Activated T-helper 1 cell treated with anti-CD3 and anti-CD28 coated beads, Interleukin-12 subunit alpha, Interleukin-12 subunit beta, Interleukin-2, Interleukin-4 antibody, amounts not matched to agents 30 ng/mL and 10 ng/mL and 1 ng/mL, durations not matched to agents 14 hours and 24 hours and 36 hours (primary cell): ENCODE measurements at regions of chr19 and their contacts with region 1.

Region 1: DNA sequence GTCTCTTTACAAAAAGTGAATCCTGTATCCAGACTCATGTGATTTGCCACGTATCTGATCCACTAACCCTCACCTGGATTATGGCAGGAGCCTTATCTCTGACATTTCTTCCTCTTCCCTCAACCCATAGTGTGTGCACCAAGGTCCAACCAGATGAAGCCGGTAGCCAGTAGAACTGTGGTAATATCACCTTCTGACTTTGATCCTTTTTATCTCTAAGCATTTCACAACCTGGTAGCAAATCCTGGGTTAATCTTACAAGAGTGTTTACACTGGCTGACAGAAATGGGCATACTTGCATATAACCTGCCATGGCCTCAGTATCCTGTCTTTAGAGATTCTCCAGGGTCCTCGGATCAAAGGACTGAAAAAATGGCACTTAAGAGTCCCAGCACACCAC is 1.9 kb downstream of the ZNF417 start:
- DNase-seq: no peak
- H3K4me3 Mint-ChIP-seq: peak overlapping the region; percentile 91
- H3K27ac Mint-ChIP-seq: no peak overlapping the region
- H3K4me1 Mint-ChIP-seq: peaks cover 15% of the 10 kb centered on the region
- H3K27me3 Mint-ChIP-seq: no peaks in the 10 kb centered on the region

Region 2: GRCh38 chr19:57613941-57614743 is 300.4 kb before region 1 on chr19 and contains the start of gene ZNF134:
- intact Hi-C with region 1: loop called (anchors 1 kb)
- DNase-seq: peak; percentile 84
- H3K4me3 Mint-ChIP-seq: peak within 1 kb of the TSS; percentile 90
- H3K27ac Mint-ChIP-seq: peak within 1 kb of the TSS; percentile 78
- H3K4me1 Mint-ChIP-seq: peaks cover 11% of the 10 kb centered on the region
- H3K27me3 Mint-ChIP-seq: no peaks in the 10 kb centered on the region
- total RNA-seq, gene ZNF134: 8.4 and 9.4 TPM in 2 replicates

Region 3: GRCh38 chr19:57769345-57770131 is 145.0 kb before region 1 on chr19 and contains the start of gene ZNF586:
- intact Hi-C with region 1: loop called (anchors 1 kb)
- DNase-seq: peak; percentile 85
- H3K4me3 Mint-ChIP-seq: peak within 1 kb of the TSS; percentile 94
- H3K27ac Mint-ChIP-seq: peak within 1 kb of the TSS; percentile 89
- H3K4me1 Mint-ChIP-seq: peaks cover 24% of the 10 kb centered on the region
- H3K27me3 Mint-ChIP-seq: no peaks in the 10 kb centered on the region
- total RNA-seq, gene ZNF586: 13.6 and 13.8 TPM in 2 replicates

Region 4: GRCh38 chr19:57850553-57851017 is 63.9 kb before region 1 on chr19:
- intact Hi-C with region 1: loop called (anchors 2 kb)
- DNase-seq: no peak
- H3K4me3 Mint-ChIP-seq: peak overlapping the region; percentile 92
- H3K27ac Mint-ChIP-seq: peak overlapping the region; percentile 93
- H3K4me1 Mint-ChIP-seq: peaks cover 17% of the 10 kb centered on the region
- H3K27me3 Mint-ChIP-seq: no peaks in the 10 kb centered on the region

Region 5: DNA sequence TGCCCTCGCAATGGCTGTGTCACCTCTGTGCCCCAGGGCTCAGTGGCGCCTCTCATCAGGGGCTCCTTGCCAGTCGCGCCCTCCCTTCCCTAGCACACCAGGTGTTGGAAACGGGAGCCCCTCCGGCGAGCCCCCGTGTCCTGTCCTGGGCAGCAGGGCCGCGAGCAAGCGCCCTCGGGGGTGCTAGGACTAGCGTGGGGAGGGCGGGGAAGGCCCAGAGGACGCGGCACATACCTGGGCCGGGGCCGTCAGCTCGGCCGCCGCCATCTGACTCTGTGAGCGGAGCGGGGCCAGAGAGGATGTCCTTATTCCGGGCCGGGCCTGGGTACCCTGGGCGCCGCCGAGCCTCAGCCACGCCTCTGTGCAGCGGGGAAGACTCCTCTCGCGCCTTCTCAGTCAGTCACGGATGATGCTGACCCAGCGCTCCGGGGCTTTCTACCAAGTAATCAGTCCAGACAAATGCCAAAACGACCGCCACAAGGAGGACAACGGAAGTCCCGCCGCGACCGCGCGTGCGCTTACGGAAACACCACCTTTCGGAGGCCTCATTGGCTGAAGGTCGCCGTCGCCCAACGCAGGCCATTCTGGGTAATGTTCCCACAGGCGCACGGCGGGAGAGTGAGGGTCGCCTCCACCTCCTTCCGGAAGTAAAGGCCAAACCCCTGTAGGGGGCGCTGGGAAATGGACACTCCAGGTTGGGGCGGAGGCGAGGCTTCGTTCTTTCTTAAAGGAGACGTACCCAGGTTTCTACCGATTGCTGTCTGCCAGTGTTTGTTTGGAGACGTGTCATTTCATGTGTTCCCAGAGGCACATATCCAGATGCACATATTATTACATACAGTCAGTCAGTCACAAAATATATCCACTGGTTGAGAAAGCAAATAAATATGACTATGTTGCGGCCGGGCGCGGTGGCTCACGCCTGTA is 32.9 kb after region 1 on chr19 and contains the start of gene ZNF256:
- intact Hi-C with region 1: loop called (anchors 1 kb)
- DNase-seq: peak; percentile 78
- H3K4me3 Mint-ChIP-seq: peak within 1 kb of the TSS; percentile 94
- H3K27ac Mint-ChIP-seq: peak within 1 kb of the TSS; percentile 89
- H3K4me1 Mint-ChIP-seq: peaks cover 12% of the 10 kb centered on the region
- H3K27me3 Mint-ChIP-seq: no peaks in the 10 kb centered on the region
- total RNA-seq, gene ZNF256: 2.5 and 3.4 TPM in 2 replicates

Region 6: DNA sequence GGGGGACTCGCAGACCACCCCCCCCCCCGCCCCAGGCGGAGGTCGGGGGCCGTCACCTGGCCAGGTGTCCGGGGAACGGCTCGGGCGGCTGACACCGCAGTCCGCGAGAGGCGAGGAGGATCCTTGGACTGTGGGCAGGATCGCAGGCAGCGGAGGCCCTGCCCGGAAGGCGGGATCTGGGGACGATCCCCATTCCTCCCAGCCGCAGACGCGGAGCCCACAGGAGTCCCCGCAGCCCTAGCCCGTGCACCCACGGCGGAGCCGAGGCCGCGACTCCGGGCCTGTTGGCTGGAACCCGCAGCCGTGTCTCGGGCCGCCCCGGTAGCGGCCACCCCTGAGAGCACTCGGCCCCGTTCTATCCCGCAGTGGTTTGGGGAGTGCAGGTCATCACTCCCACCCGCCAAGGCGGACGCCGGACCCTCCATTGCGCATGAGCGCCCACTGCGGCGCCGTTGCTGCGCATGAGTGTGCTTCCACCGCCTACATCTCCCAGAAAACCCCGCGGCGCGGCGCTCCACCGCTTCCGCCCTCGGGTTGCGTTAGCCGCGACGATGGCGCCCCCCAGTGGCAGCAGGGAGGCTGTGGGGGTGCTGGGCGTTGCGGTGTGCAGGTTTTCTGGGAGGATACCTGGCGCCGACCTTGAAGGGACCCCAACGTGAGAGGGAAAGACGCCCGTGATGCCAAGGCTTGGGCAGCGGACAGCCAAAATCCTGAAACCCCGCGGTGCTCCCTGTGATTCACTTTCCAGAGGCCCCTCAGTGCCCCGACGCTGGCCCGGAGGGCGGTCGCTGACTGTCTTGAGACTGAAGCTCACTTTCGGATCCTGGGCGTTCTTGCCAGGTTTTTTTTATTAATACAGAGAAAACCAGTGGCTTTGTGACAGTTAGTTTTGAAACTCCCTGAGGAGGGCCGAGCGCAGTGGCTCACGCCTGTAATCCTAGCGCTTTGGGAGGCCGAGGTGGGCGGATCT is 240.4 kb after region 1 on chr19:
- intact Hi-C with region 1: loop called (anchors 1 kb)
- DNase-seq: peak; percentile 89
- H3K4me3 Mint-ChIP-seq: peak overlapping the region; percentile 76
- H3K27ac Mint-ChIP-seq: peak overlapping the region; percentile 55
- H3K4me1 Mint-ChIP-seq: peaks cover 4% of the 10 kb centered on the region
- H3K27me3 Mint-ChIP-seq: no peaks in the 10 kb centered on the region